HEK293 (cell line): ENCODE measurements at regions of chr1 and their contacts with region 1.

Region 1: DNA sequence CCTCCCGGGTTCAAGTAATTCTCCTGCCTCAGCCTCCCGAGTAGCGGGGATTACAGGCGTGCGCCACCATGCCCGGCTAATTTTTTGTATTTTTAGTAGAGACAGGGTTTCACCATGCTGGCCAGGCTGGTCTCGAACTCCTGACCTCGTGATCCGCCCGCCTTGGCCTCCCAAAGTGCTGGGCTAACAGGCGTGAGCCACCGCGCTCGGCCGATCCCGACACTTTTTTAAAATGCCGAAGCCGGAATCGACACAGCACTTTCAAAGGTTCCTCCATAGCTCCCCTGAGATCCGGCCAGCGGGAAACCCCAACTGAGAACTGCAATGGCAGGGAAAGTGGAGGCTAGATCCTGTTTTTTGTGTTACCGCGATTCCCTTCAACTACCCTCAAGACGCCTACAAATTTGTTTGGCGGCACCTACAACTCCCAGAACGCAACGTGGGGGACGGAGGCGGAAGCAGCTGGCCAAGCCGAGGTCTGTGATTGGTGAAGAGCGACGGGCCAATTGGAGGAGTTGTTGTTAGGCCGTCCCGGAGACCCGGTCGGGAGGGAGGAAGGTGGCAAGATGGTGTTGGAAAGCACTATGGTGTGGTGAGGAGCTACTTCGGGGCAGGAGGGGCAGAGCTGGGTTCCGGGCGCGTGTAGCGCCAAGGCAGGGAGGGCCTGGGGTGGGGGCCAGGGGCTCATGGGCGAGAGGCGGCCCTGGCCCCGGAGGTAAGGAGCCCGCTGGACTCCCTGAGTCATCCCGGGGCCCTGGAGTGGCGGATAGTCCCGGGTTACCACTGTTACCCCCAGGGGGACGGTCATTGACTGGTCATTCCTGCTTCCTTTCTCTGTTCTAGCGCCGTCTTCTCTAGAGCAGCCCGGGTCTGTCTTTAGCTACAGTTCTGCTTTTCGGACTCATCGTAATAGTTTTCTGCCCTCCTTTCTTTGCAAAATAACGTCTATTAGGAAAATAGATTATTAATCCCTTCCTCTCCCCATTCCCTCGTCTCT is at the start of gene PSMD4:
- H3K4me3 ChIP-seq: peak within 1 kb of the TSS; percentile 92
- H3K27ac ChIP-seq: peak within 1 kb of the TSS; percentile 42
- H3K4me1 ChIP-seq: peaks cover 2% of the 10 kb centered on the region; the same call in 1 of the 2 replicates
- CTCF ChIP-seq: 0 out of 2 replicates have a peak, but pooled peaks have one; percentile 23

Region 2: DNA sequence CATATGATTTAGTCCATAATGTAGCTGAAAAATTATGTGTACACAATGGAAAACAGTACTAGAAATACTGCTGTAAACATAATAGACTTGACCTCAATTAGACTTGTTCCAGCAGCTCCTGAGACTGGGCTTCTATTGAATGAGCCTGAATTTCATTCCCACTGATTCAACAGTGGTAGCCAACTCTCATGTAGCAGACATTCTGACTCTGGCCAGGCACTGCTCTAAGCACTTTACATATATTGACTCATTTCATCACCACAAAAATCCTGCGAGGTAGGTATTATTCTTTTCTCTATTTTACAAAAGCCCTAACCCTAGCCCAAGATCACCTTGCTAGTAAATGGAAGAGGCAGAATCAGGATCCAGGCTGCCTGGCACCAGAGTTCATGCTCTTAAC is 476.1 kb before region 1 on chr1:
- CTCF ChIA-PET with region 1: no interaction called
- POLR2A ChIA-PET with region 1: no interaction called
- H3K4me3 ChIP-seq: no peak overlapping the region
- H3K27ac ChIP-seq: no peak overlapping the region
- H3K4me1 ChIP-seq: no peaks in the 10 kb centered on the region
- CTCF ChIP-seq: no peak

Region 3: GRCh38 chr1:150906341-150906740 is 348.2 kb before region 1 on chr1:
- CTCF ChIA-PET with region 1: no interaction called
- POLR2A ChIA-PET with region 1: no interaction called
- H3K4me3 ChIP-seq: no peak overlapping the region
- H3K27ac ChIP-seq: no peak overlapping the region
- H3K4me1 ChIP-seq: no peaks in the 10 kb centered on the region
- CTCF ChIP-seq: no peak

Region 4: GRCh38 chr1:151098126-151098525 is 156.4 kb before region 1 on chr1:
- CTCF ChIA-PET with region 1: interaction called, 16 read pairs
- POLR2A ChIA-PET with region 1: interaction called, 3 read pairs
- H3K4me3 ChIP-seq: no peak overlapping the region
- H3K27ac ChIP-seq: no peak overlapping the region
- H3K4me1 ChIP-seq: no peaks in the 10 kb centered on the region
- CTCF ChIP-seq: no peak

Region 5: GRCh38 chr1:151130987-151131586 is 123.4 kb before region 1 on chr1:
- CTCF ChIA-PET with region 1: no interaction called
- POLR2A ChIA-PET with region 1: no interaction called
- H3K4me3 ChIP-seq: no peak overlapping the region
- H3K27ac ChIP-seq: no peak overlapping the region
- H3K4me1 ChIP-seq: 0 out of 2 replicates have a peak, but pooled peaks cover 2% of the 10 kb centered on the region
- CTCF ChIP-seq: no peak

Region 6: DNA sequence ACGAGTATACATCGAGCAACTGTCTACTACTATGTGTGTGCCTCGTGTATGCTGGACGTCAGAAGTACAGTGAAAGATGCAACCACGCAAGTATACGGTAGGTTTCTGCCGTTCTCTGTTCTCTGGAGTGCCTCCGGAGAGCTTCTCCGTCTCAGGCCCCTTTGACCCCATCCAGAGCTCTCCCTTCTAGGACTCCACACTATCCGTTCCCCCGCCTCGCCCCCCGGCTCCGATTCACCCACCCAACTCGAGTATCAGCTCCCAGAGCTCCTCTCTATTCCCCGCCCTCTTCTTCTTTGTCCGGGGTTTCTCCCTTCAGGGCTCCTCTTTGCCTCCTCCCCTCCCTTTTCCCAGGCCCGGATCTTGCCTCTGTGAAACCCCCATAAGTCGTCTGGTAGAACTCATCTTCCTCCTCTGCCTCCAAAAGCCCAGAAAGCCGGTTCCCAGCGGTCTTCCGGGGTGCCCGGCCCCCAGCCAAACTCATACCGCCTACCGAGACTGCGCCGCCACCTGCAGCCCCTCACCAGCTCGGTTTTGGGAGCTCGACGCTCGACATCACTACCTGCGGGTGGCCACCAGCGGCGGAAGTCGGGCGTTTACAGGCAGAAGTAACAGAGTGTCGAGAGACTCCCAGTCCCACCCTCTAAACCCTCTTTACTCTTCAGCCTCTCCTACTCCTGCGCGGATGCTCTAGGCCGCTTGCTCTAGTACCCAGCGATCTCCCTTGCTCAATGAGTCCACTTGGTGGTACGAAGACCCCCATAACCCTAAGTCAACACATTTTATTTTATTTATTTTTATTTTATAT is 64.7 kb before region 1 on chr1 and contains the start of gene VPS72:
- CTCF ChIA-PET with region 1: interaction called, 7 read pairs
- POLR2A ChIA-PET with region 1: interaction called, 14 read pairs
- H3K4me3 ChIP-seq: peak within 1 kb of the TSS; percentile 79
- H3K27ac ChIP-seq: peak within 1 kb of the TSS; percentile 64
- H3K4me1 ChIP-seq: no peaks in the 10 kb centered on the region
- CTCF ChIP-seq: peak; percentile 48

Region 7: DNA sequence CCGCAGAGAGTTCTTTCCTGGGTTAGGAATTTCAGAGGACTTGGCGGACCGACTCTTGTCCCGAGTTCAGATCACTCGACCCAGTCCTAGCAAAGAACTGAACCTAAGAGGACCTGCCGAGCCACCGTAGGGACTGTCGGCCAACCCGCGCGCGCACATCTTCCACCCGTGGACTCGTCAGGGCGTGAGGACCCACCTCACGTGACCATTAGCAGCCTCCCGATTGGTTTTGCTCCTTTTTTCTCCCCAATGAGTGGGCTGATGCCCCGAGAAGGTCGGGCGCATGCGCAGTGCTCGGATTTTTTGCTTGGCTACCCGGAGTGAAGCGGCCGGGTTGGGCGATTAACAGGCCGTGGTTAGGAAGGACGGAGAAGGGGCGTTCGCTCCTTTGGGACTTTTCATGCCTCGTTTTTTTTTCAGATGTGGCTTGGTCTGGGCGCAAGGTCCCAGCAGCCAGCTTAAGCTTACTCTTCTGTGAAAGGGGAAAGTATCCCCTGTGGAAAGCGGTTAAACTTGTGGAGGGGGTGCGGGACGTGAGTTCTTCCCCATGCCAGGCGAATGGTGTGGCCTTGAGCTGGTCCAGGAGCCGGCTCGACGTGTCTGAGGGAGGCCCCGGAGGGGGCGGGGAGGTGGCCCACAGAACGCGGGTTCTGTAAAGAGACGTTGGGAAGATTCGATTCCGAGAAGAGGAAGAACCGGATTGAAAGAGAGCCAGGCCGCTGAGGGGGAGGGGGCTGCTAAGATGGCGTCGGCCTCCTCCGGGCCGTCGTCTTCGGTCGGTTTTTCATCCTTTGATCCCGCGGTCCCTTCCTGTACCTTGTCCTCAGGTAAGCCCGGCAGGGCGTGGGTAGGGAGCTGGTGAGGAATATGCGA is 56.0 kb before region 1 on chr1 and contains the start of gene PIP5K1A:
- CTCF ChIA-PET with region 1: interaction called, 12 read pairs
- POLR2A ChIA-PET with region 1: interaction called, 9 read pairs
- H3K4me3 ChIP-seq: peak within 1 kb of the TSS; percentile 94
- H3K27ac ChIP-seq: peak within 1 kb of the TSS; percentile 80
- H3K4me1 ChIP-seq: peaks cover 8% of the 10 kb centered on the region
- CTCF ChIP-seq: no peak

Region 8: GRCh38 chr1:151227634-151228033 is 26.9 kb before region 1 on chr1:
- CTCF ChIA-PET with region 1: interaction called, 15 read pairs
- POLR2A ChIA-PET with region 1: interaction called, 7 read pairs
- H3K4me3 ChIP-seq: no peak overlapping the region
- H3K27ac ChIP-seq: no peak overlapping the region
- H3K4me1 ChIP-seq: no peaks in the 10 kb centered on the region
- CTCF ChIP-seq: no peak

Region 9: DNA sequence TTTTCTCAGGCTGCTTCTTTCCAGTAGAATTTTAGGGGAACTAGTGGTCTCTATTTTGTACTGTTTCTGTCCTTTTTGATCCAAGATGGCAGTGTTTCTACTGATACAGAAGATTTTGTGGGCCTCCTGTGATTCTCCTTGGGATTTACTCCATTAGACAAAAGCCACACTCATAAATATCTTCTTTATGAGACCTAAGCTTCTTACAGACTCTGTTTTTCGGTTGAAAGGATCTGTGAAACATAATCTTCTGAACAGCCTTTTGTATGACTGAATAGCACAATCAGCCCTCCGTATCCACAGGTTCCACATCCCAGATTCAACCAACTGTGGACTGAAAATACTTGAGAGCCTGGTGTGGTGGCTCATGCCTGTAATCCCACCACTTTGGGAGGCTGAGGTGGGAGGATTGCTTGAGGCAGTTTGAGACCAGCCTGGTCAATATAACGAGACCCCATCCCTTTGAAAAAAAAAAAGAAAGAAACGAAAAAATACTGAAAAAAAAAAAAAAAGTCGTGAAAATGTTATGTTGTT is 10.8 kb before region 1 on chr1:
- CTCF ChIA-PET with region 1: interaction called, 11 read pairs
- POLR2A ChIA-PET with region 1: interaction called, 14 read pairs
- H3K4me3 ChIP-seq: no peak overlapping the region
- H3K27ac ChIP-seq: no peak overlapping the region
- H3K4me1 ChIP-seq: no peaks in the 10 kb centered on the region
- CTCF ChIP-seq: no peak

Region 10: DNA sequence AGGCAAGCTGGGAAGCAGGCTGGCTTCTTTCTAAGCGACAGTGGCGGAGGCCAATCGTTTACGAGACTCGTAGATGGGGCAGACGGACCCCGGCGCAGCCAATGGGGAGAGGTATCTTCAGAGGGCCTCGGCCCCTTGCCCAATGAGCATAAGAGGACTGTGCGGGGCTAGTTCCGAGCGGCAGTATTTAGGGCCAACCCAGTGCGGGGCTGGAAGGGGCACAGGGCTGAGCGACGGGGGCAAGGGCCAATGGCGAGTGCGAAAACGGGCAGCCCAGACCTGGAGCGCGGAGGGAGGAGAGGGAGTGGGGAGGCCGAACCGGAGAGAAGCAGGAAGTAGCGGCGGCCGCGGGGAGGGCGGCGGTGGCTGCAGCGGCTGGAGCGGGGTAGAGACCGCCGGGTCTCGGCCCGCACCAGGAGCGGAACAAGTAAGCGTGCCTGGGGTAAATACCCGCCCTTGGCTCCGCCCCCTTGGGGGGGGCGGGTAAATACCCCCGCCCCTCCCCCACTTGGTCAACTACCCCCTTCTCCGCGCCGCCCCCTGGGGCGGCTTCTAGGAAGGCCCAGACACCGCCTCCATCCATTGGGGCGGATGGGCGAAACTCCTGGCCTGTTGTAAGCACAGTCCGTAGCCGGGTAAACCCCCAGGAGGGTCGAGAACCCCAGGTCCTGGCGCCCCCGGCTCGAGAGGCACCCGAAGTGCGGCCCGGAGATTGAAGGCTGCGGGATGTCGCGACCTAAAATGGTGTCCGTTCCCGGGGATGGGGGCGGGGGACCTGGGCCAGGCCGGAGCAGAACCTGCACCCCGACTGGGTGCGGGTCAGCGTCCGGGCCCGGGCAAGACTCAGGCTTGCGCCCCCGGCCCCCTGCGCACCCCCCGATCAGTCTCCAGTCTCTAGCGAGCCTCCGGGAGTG is 27.7 kb after region 1 on chr1 and contains the start of gene ZNF687:
- CTCF ChIA-PET with region 1: interaction called, 7 read pairs
- POLR2A ChIA-PET with region 1: interaction called, 24 read pairs
- H3K4me3 ChIP-seq: peak within 1 kb of the TSS; percentile 77
- H3K27ac ChIP-seq: peak within 1 kb of the TSS; percentile 90
- H3K4me1 ChIP-seq: no peaks in the 10 kb centered on the region
- CTCF ChIP-seq: no peak

Region 11: GRCh38 chr1:151809269-151809984 is 554.9 kb after region 1 on chr1:
- CTCF ChIA-PET with region 1: no interaction called
- POLR2A ChIA-PET with region 1: no interaction called
- H3K4me3 ChIP-seq: no peak overlapping the region
- H3K27ac ChIP-seq: no peak overlapping the region
- H3K4me1 ChIP-seq: no peaks in the 10 kb centered on the region
- CTCF ChIP-seq: no peak